HepG2 (cell line): ENCODE measurements at regions of chr14 and their contacts with region 1.

Region 1: GRCh38 chr14:31263485-31264133 is 56.0 kb upstream of the HECTD1 start:
- DNase-seq: peak; percentile 91
- ATAC-seq: peak; percentile 73
- H3K4me3 ChIP-seq: no peak overlapping the region; a peak in 1 of 6 replicates
- H3K27ac ChIP-seq: peak overlapping the region; percentile 89
- H3K4me1 ChIP-seq: peaks cover 86% of the 10 kb centered on the region
- H3K27me3 ChIP-seq: no peaks in the 10 kb centered on the region; a peak in 1 of 5 replicates
- CTCF ChIP-seq: no peak
- EP300 ChIP-seq: peak in 1 of 2 experiments; percentile 54; a peak in 2 of 4 replicates
- POLR2A ChIP-seq: no peak
- RAD21 ChIP-seq: peak; percentile 28; the same call in 1 of the 2 replicates

Region 2: DNA sequence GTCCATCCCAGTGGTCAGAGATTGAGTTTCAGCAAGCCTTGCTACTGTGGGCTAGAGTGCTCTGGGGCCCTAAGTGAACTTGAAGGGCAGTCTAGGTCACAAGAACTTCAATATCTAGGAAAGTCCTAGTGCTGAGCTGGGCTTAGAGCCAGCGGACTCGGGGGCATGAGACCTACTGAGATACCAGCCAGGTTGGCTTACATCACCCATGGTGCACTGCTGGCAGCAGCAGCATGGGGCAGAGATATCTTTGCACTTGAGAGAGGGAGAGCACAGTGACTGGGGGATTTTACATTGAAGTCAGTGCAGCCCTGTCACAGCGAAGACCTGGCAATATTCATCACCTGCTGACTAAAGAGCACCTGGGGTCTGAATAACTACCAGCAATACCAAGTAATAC is 1177.7 kb before region 1 on chr14:
- CTCF ChIA-PET with region 1: no interaction called
- POLR2A ChIA-PET with region 1: no interaction called
- in situ Hi-C with region 1: no loop called
- intact Hi-C with region 1: no loop called
- DNase-seq: no peak
- ATAC-seq: no peak
- H3K4me3 ChIP-seq: no peak overlapping the region
- H3K27ac ChIP-seq: no peak overlapping the region
- H3K4me1 ChIP-seq: no peaks in the 10 kb centered on the region
- H3K27me3 ChIP-seq: no peaks in the 10 kb centered on the region
- CTCF ChIP-seq: no peak
- EP300 ChIP-seq: no peak
- POLR2A ChIP-seq: no peak
- RAD21 ChIP-seq: no peak

Region 3: GRCh38 chr14:31251028-31251958 is 12.3 kb before region 1 on chr14:
- CTCF ChIA-PET with region 1: no interaction called
- POLR2A ChIA-PET with region 1: interaction called, 15 read pairs
- in situ Hi-C with region 1: no loop called
- intact Hi-C with region 1: no loop called
- DNase-seq: no peak
- ATAC-seq: peak; percentile 69
- H3K4me3 ChIP-seq: no peak overlapping the region
- H3K27ac ChIP-seq: no peak overlapping the region
- H3K4me1 ChIP-seq: peaks cover 53% of the 10 kb centered on the region
- H3K27me3 ChIP-seq: no peaks in the 10 kb centered on the region
- CTCF ChIP-seq: no peak
- EP300 ChIP-seq: no peak
- POLR2A ChIP-seq: no peak
- RAD21 ChIP-seq: no peak

Region 4: GRCh38 chr14:31280871-31281220 is 17.2 kb after region 1 on chr14:
- CTCF ChIA-PET with region 1: no interaction called
- POLR2A ChIA-PET with region 1: interaction called, 14 read pairs
- in situ Hi-C with region 1: no loop called
- intact Hi-C with region 1: no loop called
- DNase-seq: no peak
- ATAC-seq: peak; percentile 9; the same call in 1 of the 3 replicates
- H3K4me3 ChIP-seq: no peak overlapping the region
- H3K27ac ChIP-seq: no peak overlapping the region
- H3K4me1 ChIP-seq: peaks cover 45% of the 10 kb centered on the region
- H3K27me3 ChIP-seq: no peaks in the 10 kb centered on the region
- CTCF ChIP-seq: no peak
- EP300 ChIP-seq: no peak
- POLR2A ChIP-seq: no peak
- RAD21 ChIP-seq: no peak

Region 5: DNA sequence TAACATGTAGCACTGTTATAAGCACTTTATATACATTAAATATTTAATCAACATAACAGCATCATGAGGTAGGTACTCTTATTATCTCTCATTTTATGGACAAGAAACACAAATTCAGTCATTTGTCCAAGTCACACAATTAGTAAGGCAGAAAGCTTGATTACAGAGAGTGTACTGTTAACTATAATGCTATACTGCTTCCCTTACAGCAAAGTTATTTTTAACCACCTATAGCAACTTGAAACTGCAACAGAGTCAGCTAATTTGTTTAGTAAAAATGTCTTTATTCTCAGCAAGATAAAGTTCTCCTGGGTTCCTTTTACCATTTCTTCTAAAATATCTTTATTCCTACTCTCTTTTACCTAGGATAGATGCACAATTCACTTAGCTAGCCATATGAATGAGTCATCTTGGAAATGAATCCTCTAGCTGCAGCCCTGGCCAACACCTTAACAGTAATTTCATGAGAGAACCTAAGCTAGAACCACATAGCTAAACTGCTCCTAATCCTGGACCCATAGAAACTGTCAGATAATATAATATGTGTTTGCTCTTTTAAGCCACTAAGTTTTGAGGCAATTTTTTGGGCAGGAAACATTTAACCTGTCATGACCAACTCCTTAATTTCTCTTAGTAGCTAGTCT is 34.2 kb after region 1 on chr14:
- CTCF ChIA-PET with region 1: no interaction called
- POLR2A ChIA-PET with region 1: no interaction called
- in situ Hi-C with region 1: no loop called
- intact Hi-C with region 1: no loop called
- DNase-seq: no peak
- ATAC-seq: peak; percentile 22; the same call in 1 of the 3 replicates
- H3K4me3 ChIP-seq: no peak overlapping the region
- H3K27ac ChIP-seq: no peak overlapping the region
- H3K4me1 ChIP-seq: peaks cover 18% of the 10 kb centered on the region
- H3K27me3 ChIP-seq: no peaks in the 10 kb centered on the region
- CTCF ChIP-seq: no peak
- EP300 ChIP-seq: no peak
- POLR2A ChIP-seq: no peak
- RAD21 ChIP-seq: no peak